Right cardiac atrium (tissue), 5 donors: ENCODE measurements at regions of chr1 and their contacts with region 1.

Region 1: GRCh38 chr1:231357831-231358354 is 19.8 kb downstream of the SPRTN start:
- DNase-seq: peak in 2 of 3 donors; percentile 7 to 31
- ATAC-seq: peak; percentile 74 to 78
- H3K4me3 ChIP-seq: no peak overlapping the region
- H3K27ac ChIP-seq: peak overlapping the region; percentile 35
- H3K4me1 ChIP-seq: no peaks in the 10 kb centered on the region
- H3K27me3 ChIP-seq: no peaks in the 10 kb centered on the region

Region 2: DNA sequence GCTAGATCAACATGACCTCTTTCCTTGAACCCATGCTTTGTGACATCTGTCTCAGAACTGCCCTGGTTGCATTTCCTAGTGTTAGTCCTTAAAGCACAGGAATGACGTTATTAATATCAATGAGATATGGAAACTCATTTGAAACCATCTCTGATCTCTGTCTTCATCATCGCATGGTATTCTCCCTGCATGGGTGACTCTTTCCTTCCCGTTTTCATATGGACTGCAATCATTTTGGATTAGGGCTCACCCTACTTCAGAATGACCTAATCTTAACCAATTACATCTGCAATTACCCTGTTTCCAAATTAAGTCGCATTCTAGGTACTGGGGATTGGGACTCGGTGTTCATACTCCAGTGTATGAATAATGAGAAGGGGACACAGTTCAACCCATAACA is 227.0 kb after region 1 on chr1:
- intact Hi-C with region 1: loop called in 3 of 4 experiments (anchors 5 kb)
- DNase-seq: no peak
- ATAC-seq: no peak
- H3K4me3 ChIP-seq: no peak overlapping the region
- H3K27ac ChIP-seq: no peak overlapping the region
- H3K4me1 ChIP-seq: peaks cover 1% of the 10 kb centered on the region
- H3K27me3 ChIP-seq: no peaks in the 10 kb centered on the region

Region 3: GRCh38 chr1:231603598-231604275 is 245.8 kb after region 1 on chr1:
- intact Hi-C with region 1: loop called in 3 of 4 experiments (anchors 5 kb)
- DNase-seq: peak in 2 of 3 donors; percentile 17 to 42
- ATAC-seq: peak; percentile 40 to 72
- H3K4me3 ChIP-seq: peak overlapping the region; percentile 83
- H3K27ac ChIP-seq: no peak overlapping the region
- H3K4me1 ChIP-seq: peaks cover 2% of the 10 kb centered on the region
- H3K27me3 ChIP-seq: no peaks in the 10 kb centered on the region

Region 4: DNA sequence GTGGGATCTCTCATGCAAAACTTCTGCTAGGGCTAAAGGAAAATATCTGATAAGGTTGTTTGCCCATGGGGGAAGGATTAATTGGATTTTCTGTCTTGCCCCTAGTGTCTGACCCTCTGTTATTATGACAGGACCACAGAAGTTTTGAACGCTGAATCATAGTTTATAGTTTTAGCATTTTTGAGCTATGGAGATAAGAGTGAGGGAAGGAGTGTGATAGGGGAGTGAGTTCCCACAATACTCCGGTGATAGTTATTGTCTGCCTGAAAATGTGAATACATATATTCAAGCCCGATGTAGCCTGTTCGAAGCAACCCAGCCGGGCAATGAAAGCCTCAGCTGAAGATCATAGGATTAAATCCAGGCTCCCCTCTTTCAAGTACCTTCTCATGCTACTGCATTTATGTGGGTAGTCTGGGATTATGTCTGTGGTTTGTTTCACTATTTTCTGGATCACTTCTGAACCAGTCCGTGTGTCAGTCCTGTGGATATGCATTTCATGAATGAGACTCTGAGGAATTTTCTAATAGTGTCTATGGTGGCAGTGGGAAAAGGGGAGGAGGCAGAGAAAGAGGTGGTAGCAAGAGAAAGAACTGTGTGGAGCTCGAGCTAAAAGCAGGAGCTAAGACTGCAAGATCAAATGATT is 527.4 kb after region 1 on chr1:
- intact Hi-C with region 1: no loop called
- DNase-seq: no peak
- ATAC-seq: no peak
- H3K4me3 ChIP-seq: no peak overlapping the region
- H3K27ac ChIP-seq: no peak overlapping the region
- H3K4me1 ChIP-seq: peaks cover 2% of the 10 kb centered on the region
- H3K27me3 ChIP-seq: no peaks in the 10 kb centered on the region